ENCODE measurements at regions of chr3 and their contacts with region 1.

Region 1: GRCh38 chr3:177359593-177360357 is 162.5 kb upstream of the TBL1XR1 start:
- DNase-seq: peak; percentile 96 to 97
- ATAC-seq: peak; percentile 87 to 93 (median 88)
- H3K4me3 ChIP-seq: peak overlapping the region; percentile 60
- H3K27ac ChIP-seq: peak overlapping the region; percentile 95
- H3K4me1 ChIP-seq: peaks cover 52% of the 10 kb centered on the region
- H3K27me3 ChIP-seq: no peaks in the 10 kb centered on the region
- CTCF ChIP-seq: no peak

Region 2: DNA sequence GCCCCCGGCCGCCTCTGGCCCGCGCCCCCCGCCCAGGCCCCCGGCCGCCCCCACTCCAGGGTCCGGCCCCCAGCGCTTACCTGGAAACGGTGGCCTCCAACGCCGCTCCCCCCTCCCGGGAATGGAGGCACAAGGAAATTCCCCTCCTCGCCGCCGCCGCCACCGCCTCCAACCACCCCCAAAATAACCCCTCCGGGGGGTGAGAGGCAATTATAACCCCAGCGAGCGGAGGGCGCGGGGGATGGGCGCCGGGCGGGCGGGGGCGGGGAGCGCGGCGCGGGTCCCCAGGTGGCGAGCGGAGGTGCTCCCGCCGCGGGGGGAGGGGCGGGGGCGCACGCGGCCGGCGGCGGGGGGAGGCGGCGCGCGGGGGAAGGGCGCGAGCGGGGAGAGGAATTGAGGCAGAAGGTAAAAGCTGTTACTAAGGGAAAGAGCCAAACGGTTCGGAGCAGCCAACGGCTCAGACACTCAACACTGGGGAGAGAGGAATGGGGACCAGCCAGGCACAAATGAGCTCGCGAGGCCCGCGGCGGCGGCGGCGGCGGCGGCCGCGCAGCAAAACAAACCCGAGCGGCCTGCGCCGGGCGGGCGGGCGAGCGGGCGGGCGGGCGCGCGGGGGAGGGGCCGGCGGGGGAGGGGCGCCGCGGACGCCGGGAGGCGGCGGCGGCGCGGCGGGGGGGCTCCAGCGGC is 162.6 kb before region 1 on chr3 and contains the start of gene TBL1XR1:
- intact Hi-C with region 1: loop called (anchors 1 kb)
- DNase-seq: peak; percentile 91 to 96
- ATAC-seq: peak; percentile 87 to 90 (median 88)
- H3K4me3 ChIP-seq: peak within 1 kb of the TSS; percentile 89
- H3K27ac ChIP-seq: peak within 1 kb of the TSS; percentile 97
- H3K4me1 ChIP-seq: peaks cover 19% of the 10 kb centered on the region
- H3K27me3 ChIP-seq: no peaks in the 10 kb centered on the region
- CTCF ChIP-seq: no peak
- total RNA-seq, gene TBL1XR1: 58.6 to 97.4 (median 69.4) TPM

Region 3: GRCh38 chr3:177345049-177345972 is 14.5 kb before region 1 on chr3:
- intact Hi-C with region 1: loop called in 1 of 2 experiments (anchors 2 kb)
- DNase-seq: peak; percentile 86 to 94
- ATAC-seq: peak; percentile 97 to 99 (median 97)
- H3K4me3 ChIP-seq: peak overlapping the region; percentile 46
- H3K27ac ChIP-seq: peak overlapping the region; percentile 95
- H3K4me1 ChIP-seq: peaks cover 25% of the 10 kb centered on the region
- H3K27me3 ChIP-seq: no peaks in the 10 kb centered on the region
- CTCF ChIP-seq: no peak

Region 4: DNA sequence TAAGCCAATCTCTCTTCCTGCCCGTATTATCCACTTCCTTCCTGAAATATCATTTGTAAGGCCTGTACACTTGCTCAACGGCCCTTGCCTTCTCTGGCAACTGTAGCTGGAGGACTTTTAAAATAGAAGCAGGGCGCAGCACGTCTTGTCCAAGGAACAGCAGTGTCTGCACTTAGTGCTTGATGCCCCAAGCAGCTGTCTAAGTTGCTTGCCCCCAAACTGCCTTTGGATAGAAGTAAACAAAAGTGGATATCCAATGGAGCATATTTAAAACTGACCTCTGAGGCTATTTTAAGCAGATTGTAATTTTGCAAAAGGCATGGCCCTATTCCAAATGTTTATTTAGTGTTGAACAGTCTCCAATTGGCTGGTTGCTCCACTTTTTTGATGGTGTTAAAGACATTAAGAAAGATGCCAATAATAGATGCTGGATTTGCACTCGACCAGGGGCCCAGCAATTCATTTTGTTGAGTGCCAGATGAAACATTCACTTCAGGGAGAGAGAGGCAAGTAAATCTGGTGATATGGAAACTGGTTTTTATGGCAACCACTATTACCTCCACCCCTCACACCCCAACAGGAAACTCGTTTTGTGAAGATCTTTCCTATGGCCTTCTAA is 364.4 kb after region 1 on chr3:
- intact Hi-C with region 1: loop called in 1 of 2 experiments (anchors 10 kb)
- DNase-seq: peak; percentile 72 to 89
- ATAC-seq: peak; percentile 94 to 97 (median 96)
- H3K4me3 ChIP-seq: no peak overlapping the region
- H3K27ac ChIP-seq: peak overlapping the region; percentile 82
- H3K4me1 ChIP-seq: peaks cover 55% of the 10 kb centered on the region
- H3K27me3 ChIP-seq: no peaks in the 10 kb centered on the region
- CTCF ChIP-seq: no peak

Measured in psoas muscle (tissue), 8 donors.